Activated CD8-positive, alpha-beta T cell treated with anti-CD3 and anti-CD28 coated beads for 36 hours (primary cell): ENCODE measurements at regions of chr4 and their contacts with region 1.

Region 1: DNA sequence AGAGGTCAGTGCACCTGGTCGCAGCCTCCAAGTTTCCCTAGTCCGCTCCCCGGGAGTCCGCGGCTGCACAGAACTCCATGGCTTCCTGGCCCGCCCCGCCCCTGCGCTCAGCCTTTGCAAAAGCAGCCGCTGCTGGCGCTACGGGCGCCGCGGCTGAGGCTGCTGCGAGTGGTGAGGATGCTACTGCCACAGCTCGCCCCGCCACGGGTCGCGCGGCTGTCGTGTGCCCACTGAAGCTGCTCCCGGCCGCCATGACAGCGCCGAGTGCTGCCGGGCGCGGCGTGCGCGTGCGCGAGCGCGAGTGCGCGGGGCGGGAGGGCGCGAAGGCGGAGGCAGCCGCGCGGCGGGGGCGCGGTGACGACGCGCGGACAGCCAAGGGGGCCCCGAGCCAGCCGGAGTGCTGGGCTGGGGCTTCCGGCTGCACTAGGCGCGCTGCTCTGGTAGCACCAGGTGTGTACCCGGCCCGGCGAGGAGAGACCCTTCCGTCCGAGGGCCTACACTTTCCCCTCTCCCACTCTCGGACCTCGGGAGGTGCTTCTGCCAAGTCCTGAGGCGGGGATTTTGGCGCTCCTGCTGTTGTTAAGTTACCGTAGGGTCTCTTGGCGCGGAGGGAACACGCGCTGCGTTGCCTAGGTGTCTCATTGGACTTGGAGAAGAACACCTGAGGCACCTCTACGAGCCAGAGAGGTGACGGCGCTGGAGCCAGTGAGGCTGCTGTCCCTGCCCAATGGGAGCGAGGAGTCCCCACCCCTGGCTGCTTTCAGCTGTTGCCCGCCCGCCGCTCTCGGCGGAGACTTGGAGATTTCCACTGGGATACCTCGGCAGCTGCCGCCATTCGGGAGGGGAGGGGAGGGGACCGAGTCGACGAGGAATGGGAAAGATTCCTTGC is 619 bp upstream of the LRBA start:
- DNase-seq: peak; percentile 83
- ATAC-seq: peak; percentile 84
- H3K4me3 Mint-ChIP-seq: peak overlapping the region; percentile 95
- H3K27ac Mint-ChIP-seq: peak overlapping the region; percentile 99
- H3K4me1 Mint-ChIP-seq: peaks cover 18% of the 10 kb centered on the region
- H3K27me3 Mint-ChIP-seq: no peaks in the 10 kb centered on the region
- CTCF ChIP-seq: no peak

Region 2: GRCh38 chr4:150970685-150971151 is 45.0 kb before region 1 on chr4:
- CTCF ChIA-PET with region 1: interaction called, 3 read pairs
- POLR2A ChIA-PET with region 1: interaction called, 4 read pairs
- intact Hi-C with region 1: loop called (anchors 5 kb)
- DNase-seq: no peak
- ATAC-seq: peak; percentile 81
- H3K4me3 Mint-ChIP-seq: no peak overlapping the region
- H3K27ac Mint-ChIP-seq: peak overlapping the region; percentile 49
- H3K4me1 Mint-ChIP-seq: peaks cover 58% of the 10 kb centered on the region
- H3K27me3 Mint-ChIP-seq: no peaks in the 10 kb centered on the region
- CTCF ChIP-seq: no peak

Region 3: DNA sequence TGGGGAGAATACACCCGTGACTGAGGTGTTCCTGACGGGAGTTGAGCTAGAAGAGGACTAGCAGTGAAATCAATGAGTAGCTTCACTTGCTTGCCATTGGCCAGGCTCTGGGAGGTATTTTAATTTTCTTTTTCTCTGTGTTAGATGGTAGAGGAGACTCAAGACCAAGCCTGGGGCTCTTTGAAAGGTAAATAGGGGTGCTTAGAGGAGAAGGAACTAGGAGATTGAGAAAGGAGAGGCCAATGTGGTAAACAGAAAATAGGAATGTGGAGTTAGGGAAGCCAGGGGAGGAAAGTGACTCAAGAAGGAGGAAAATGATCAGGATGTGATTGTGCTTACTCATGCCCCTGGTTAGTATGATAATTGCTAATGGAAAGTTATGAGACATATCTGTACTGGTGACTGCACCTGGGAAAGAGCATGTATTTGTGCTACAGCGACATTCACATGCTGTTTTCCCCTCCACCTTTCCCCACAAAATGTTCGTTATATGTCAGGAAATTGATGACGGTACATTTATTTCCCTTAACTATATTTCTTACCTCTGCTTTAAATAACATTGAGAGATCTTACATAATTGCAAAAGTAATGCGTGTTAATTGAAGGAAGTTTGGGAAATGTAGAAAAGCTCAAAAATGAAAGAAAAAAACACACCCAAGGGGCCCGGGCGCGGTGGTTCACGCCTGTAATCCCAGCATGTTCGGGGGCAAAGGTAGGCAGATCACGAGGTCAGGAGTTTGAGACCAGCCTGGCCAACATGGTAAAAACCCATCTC is 16.3 kb after region 1 on chr4:
- CTCF ChIA-PET with region 1: interaction called, 8 read pairs
- POLR2A ChIA-PET with region 1: interaction called, 35 read pairs
- intact Hi-C with region 1: loop called (anchors 2 kb)
- DNase-seq: peak; percentile 34
- ATAC-seq: peak; percentile 65
- H3K4me3 Mint-ChIP-seq: peak overlapping the region; percentile 70
- H3K27ac Mint-ChIP-seq: peak overlapping the region; percentile 93
- H3K4me1 Mint-ChIP-seq: peaks cover 29% of the 10 kb centered on the region
- H3K27me3 Mint-ChIP-seq: peaks cover 5% of the 10 kb centered on the region
- CTCF ChIP-seq: no peak

Region 4: DNA sequence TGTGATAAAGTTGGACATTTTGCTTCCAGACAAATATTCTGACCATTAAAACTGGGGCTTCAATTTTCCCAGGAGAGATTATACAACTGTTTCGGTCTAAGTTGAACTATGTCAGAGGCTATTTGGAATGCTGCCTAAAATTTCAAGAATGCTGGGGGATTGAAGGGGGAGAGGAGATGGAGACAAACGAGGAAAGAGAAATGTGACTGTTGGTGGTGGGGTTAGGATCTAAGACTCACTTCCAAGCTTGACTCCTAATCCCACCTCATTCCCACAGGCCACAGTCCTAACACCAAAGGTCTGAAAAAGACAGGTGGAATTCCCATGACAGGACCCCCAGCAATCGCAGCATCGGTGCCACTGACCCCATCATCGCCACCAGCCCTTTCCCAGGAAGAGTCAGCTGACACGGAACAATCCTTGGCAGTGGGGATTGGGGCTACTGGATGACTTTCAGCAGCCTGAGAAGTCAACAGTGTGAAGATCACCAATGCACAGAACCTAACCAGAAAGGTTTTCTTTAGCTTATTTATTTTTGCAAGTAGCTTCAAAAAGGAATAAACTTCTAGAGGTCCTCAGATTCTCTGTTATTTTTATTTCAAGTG is 187.2 kb after region 1 on chr4:
- CTCF ChIA-PET with region 1: no interaction called
- POLR2A ChIA-PET with region 1: no interaction called
- intact Hi-C with region 1: no loop called
- DNase-seq: no peak
- ATAC-seq: no peak
- H3K4me3 Mint-ChIP-seq: no peak overlapping the region
- H3K27ac Mint-ChIP-seq: no peak overlapping the region
- H3K4me1 Mint-ChIP-seq: no peaks in the 10 kb centered on the region
- H3K27me3 Mint-ChIP-seq: no peaks in the 10 kb centered on the region
- CTCF ChIP-seq: no peak